Endothelial cell of umbilical vein (primary cell): ENCODE measurements at regions of chr6 and their contacts with region 1.

Region 1: GRCh38 chr6:113994918-113995342 is 24.0 kb upstream of the HDAC2 start:
- DNase-seq: peak; percentile 91
- H3K4me3 ChIP-seq: no peak overlapping the region
- H3K27ac ChIP-seq: peak overlapping the region; percentile 84
- H3K4me1 ChIP-seq: peaks cover 22% of the 10 kb centered on the region
- H3K27me3 ChIP-seq: peaks cover 0 to 2% of the 10 kb centered on the region in 2 experiments
- CTCF ChIP-seq: peak; percentile 72 to 95
- POLR2A ChIP-seq: no peak

Region 2: DNA sequence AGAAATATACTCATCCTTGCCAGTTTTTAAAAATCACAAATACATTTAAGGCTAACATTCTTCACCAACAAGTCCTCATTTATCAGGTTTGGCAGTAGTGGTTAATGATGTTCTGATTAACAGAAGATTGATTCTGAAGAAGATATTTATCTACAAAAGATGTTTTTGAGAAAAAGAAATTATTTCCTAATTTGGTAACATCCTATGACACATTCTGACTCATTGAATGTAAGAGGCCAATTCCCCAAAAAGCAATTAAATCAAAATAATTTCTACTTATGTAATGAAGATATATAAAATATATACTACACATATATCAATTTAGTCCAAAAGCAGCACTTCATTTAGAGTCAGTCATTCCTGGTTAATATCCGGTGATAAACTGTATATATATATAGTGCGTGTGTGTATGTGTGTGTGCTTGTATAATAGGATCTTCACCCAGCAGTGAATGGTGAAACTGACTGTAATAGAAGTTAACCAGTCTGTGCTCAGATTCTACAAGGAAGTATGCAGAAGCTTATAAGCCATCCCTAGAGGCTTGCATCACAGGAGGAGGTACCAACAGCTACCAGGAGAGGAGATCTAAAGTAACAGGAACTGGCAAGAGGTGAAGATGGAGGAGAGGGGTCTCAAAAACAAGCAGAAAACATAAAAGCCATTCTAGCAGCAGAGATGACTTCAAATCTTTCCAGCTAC is 220.7 kb before region 1 on chr6:
- CTCF ChIA-PET with region 1: no interaction called
- POLR2A ChIA-PET with region 1: no interaction called
- dilution Hi-C with region 1: no loop called
- intact Hi-C with region 1: no loop called
- DNase-seq: peak; percentile 12
- H3K4me3 ChIP-seq: no peak overlapping the region
- H3K27ac ChIP-seq: no peak overlapping the region
- H3K4me1 ChIP-seq: peaks cover 4% of the 10 kb centered on the region
- H3K27me3 ChIP-seq: no peaks in the 10 kb centered on the region
- CTCF ChIP-seq: no peak
- POLR2A ChIP-seq: no peak

Region 3: DNA sequence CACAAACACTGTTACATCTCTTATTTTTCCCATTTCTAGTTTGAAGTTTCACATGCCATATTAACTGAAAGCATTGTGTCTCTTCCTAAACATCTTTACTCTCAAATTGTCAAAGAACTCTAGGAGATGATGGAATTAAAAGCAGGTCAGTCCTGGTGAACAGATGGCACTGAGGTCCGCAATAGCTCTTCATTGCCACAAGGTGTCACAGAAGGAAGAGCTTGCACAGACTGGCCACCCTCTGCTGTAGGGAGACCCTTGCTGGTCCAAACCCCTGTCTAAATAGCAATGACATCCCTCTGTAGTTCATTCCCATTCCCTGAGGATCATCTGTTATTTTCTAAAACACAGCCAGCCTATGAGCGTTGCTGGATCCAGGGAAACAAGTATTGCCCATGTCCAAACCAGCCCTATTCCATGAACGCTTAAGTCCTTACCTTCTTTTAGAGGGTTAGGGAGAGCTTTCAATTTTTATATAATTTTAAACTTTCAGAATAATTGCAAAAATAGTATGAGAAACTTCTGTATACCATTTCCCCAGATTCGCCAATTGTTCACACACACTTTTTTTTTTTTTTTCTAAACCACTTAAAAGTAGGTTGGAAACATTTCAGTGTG is 13.9 kb before region 1 on chr6:
- CTCF ChIA-PET with region 1: interaction called, 41 read pairs
- POLR2A ChIA-PET with region 1: no interaction called
- dilution Hi-C with region 1: no loop called
- intact Hi-C with region 1: no loop called
- DNase-seq: peak; percentile 35
- H3K4me3 ChIP-seq: no peak overlapping the region
- H3K27ac ChIP-seq: no peak overlapping the region
- H3K4me1 ChIP-seq: no peaks in the 10 kb centered on the region
- H3K27me3 ChIP-seq: no peaks in the 10 kb centered on the region
- CTCF ChIP-seq: peak; percentile 59 to 71
- POLR2A ChIP-seq: no peak

Region 4: DNA sequence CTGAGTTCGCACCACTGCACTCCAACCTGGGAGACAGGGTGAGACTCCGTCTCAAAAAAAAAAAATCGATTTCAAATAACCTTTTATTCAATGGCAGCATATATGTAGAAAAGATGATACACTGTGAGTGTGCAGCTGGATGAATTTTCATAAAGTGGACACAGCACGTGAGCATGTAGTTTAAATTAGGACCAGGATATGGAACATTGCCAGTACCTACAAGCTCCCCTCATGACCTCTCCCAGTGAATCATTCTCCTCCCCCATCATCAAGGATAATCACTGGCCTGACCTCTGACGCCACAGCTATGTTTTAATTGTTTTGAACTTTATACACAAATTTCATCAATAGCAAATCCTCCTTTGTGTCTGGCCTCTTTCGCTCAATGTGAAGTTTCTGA is 29.8 kb after region 1 on chr6:
- CTCF ChIA-PET with region 1: interaction called, 15 read pairs
- POLR2A ChIA-PET with region 1: no interaction called
- dilution Hi-C with region 1: no loop called
- intact Hi-C with region 1: no loop called
- DNase-seq: no peak
- H3K4me3 ChIP-seq: no peak overlapping the region
- H3K27ac ChIP-seq: no peak overlapping the region
- H3K4me1 ChIP-seq: peaks cover 2% of the 10 kb centered on the region
- H3K27me3 ChIP-seq: peaks cover 0 to 1% of the 10 kb centered on the region in 2 experiments
- CTCF ChIP-seq: no peak
- POLR2A ChIP-seq: no peak

Region 5: DNA sequence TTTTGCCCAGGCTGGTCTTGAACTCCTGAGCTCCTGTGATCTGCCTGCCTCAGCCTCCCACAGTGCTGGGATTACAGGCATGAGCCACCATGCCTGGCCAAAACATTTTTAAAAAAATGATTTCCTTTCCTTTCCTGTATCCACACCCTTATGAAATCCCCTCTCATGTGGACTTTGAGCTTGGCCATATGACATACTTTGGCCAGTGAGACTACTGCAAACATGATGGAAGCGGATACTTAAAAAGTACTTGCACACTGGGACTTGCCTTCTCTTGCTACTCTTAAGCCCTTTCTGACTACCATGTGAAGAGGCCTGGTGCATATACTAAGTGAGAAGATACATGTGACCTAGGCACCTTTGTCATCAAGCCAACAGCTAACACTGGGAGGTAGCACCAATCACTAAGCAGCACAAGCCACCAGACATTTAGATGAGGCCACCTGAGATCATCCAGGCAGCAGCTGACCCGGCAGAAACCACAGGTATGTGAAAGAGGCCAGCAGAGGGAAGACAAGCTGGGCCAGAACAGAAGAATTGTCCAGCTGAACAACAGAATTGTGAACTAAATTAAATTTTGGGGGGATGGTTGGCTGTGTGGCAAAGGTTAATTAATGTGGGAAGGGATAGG is 54.6 kb after region 1 on chr6:
- CTCF ChIA-PET with region 1: interaction called, 10 read pairs
- POLR2A ChIA-PET with region 1: no interaction called
- dilution Hi-C with region 1: no loop called
- intact Hi-C with region 1: no loop called
- DNase-seq: no peak
- H3K4me3 ChIP-seq: no peak overlapping the region
- H3K27ac ChIP-seq: no peak overlapping the region
- H3K4me1 ChIP-seq: no peaks in the 10 kb centered on the region
- H3K27me3 ChIP-seq: peaks cover 0 to 1% of the 10 kb centered on the region in 2 experiments
- CTCF ChIP-seq: no peak
- POLR2A ChIP-seq: no peak

Region 6: DNA sequence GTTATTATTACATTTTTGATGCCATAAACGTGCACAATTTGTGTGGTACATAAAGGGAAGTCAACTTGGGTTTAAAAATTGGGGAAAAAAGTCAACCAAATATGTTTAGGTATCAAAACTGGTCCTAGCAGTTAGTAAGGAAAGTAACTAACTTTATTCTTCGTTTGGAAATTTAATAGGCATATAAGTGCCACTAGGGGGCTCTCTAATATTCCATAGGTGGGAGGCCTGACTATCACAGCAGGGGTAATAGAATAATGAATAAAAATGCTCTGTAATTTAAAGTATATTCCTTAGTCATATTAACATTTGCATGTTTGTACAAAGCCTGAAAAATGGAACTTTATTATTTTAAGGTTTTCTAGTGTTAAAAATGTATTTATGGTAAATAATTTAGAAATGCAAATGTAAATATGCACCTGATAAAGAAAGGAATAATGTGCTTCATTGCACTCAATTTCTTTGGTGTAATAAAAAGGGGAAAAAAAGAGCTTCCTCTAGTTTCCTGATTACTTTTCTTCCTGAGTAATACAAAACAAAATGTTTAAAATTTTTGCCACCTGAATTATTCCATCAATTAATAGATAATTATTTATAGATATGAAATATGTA is 101.7 kb after region 1 on chr6:
- CTCF ChIA-PET with region 1: interaction called, 352 read pairs
- POLR2A ChIA-PET with region 1: no interaction called
- dilution Hi-C with region 1: no loop called
- intact Hi-C with region 1: no loop called
- DNase-seq: peak; percentile 30
- H3K4me3 ChIP-seq: no peak overlapping the region
- H3K27ac ChIP-seq: no peak overlapping the region
- H3K4me1 ChIP-seq: peaks cover 3% of the 10 kb centered on the region
- H3K27me3 ChIP-seq: peaks cover 6% of the 10 kb centered on the region in 2 experiments
- CTCF ChIP-seq: peak; percentile 55 to 56
- POLR2A ChIP-seq: no peak

Region 7: DNA sequence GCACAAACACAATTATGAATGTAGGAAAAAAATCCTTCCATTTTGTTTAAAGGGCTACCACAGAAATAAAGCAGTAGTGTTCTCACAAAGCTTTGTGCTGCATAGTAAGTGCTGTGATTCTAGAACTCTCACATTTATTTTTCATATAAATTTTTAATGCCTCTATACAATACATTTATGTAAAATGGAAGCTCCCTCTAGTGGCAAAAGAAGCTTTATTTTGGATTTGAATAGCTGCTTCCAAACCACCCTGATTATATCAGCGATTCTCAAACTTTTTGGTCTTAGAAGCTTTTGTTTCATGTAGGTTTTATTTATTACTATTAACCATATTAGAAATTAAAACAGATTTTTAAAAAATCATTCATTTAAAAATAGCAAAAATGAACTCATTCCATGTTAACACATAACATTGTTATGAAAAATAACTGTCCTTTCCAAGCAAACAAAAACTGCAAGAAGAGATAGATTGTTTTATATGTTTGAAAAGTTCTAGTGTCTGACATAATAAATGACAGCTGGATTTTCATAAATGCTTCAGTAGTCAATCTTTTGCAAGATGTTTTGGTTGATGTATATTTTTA is 309.5 kb after region 1 on chr6:
- CTCF ChIA-PET with region 1: interaction called, 117 read pairs
- POLR2A ChIA-PET with region 1: no interaction called
- dilution Hi-C with region 1: no loop called
- intact Hi-C with region 1: loop called (anchors 1 kb)
- DNase-seq: peak; percentile 19
- H3K4me3 ChIP-seq: no peak overlapping the region
- H3K27ac ChIP-seq: no peak overlapping the region
- H3K4me1 ChIP-seq: no peaks in the 10 kb centered on the region
- H3K27me3 ChIP-seq: no peaks in the 10 kb centered on the region
- CTCF ChIP-seq: peak; percentile 20 to 29
- POLR2A ChIP-seq: no peak

Region 8: GRCh38 chr6:114382406-114382805 is 387.5 kb after region 1 on chr6:
- CTCF ChIA-PET with region 1: no interaction called
- POLR2A ChIA-PET with region 1: no interaction called
- dilution Hi-C with region 1: no loop called
- intact Hi-C with region 1: no loop called
- DNase-seq: no peak
- H3K4me3 ChIP-seq: no peak overlapping the region
- H3K27ac ChIP-seq: no peak overlapping the region
- H3K4me1 ChIP-seq: no peaks in the 10 kb centered on the region
- H3K27me3 ChIP-seq: no peaks in the 10 kb centered on the region
- CTCF ChIP-seq: no peak
- POLR2A ChIP-seq: no peak